Activated CD4-positive, alpha-beta T cell treated with anti-CD3 and anti-CD28 coated beads for 36 hours (primary cell): ENCODE measurements at regions of chr15 and their contacts with region 1.

Region 1: GRCh38 chr15:34514251-34514670 is 69.2 kb downstream of the GOLGA8B start:
- DNase-seq: peak; percentile 39
- ATAC-seq: peak; percentile 52
- H3K4me3 Mint-ChIP-seq: peak overlapping the region; percentile 71
- H3K27ac Mint-ChIP-seq: no peak overlapping the region
- H3K4me1 Mint-ChIP-seq: peaks cover 11% of the 10 kb centered on the region
- H3K27me3 Mint-ChIP-seq: peaks cover 51% of the 10 kb centered on the region

Region 2: GRCh38 chr15:34456658-34457057 is 57.6 kb before region 1 on chr15:
- CTCF ChIA-PET with region 1: no interaction called
- POLR2A ChIA-PET with region 1: no interaction called
- intact Hi-C with region 1: loop called in 1 of 2 experiments (anchors 5 kb)
- DNase-seq: no peak
- ATAC-seq: no peak
- H3K4me3 Mint-ChIP-seq: no peak overlapping the region
- H3K27ac Mint-ChIP-seq: no peak overlapping the region
- H3K4me1 Mint-ChIP-seq: no peaks in the 10 kb centered on the region
- H3K27me3 Mint-ChIP-seq: peaks cover 21% of the 10 kb centered on the region

Region 3: DNA sequence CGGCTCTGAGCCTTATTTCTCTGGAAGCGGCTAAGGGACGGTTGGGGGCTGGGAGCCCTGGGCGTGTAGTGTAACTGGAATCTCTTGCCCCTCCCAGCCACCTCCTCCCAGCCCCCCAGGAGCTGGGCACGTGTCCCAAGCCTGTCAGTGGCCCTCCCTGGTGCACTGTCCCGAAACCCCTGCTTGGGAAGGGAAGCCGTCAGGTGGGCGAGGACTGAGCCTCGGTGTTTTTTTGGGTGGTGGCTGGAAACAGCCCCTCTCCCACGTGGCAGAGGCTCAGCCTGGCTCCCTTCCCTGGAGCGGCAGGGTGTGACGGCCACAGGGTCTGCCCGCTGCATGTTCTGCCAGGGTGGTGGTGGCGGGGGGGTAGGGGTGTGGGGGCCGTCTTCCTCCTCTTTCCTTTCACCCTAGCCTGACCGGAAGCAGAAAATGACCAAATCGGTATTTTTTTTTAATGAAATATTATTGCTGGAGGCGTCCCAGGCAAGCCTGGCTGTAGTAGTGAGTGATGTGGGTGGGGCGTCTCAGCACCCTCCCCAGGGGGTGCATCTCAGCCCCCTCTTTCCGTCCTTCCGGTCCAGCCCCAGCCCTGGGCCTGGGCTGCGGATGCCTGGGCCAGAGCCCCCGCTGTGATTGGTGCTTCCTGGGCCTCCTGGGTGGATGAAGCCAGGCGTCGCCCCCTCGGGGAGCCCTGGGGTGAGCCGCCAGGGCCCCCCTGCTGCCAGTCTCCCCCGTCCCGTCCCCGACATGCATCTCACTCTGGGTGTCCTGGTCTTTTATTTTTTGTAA is 17.9 kb before region 1 on chr15:
- CTCF ChIA-PET with region 1: interaction called, 3 read pairs
- POLR2A ChIA-PET with region 1: no interaction called
- intact Hi-C with region 1: loop called in 1 of 2 experiments (anchors 2 kb)
- DNase-seq: no peak
- ATAC-seq: no peak
- H3K4me3 Mint-ChIP-seq: no peak overlapping the region
- H3K27ac Mint-ChIP-seq: no peak overlapping the region
- H3K4me1 Mint-ChIP-seq: peaks cover 7% of the 10 kb centered on the region
- H3K27me3 Mint-ChIP-seq: peaks cover 61% of the 10 kb centered on the region

Region 4: GRCh38 chr15:34693053-34693744 is 178.9 kb after region 1 on chr15:
- CTCF ChIA-PET with region 1: no interaction called
- POLR2A ChIA-PET with region 1: no interaction called
- intact Hi-C with region 1: no loop called
- DNase-seq: no peak
- ATAC-seq: no peak
- H3K4me3 Mint-ChIP-seq: no peak overlapping the region
- H3K27ac Mint-ChIP-seq: no peak overlapping the region
- H3K4me1 Mint-ChIP-seq: peaks cover 2% of the 10 kb centered on the region
- H3K27me3 Mint-ChIP-seq: peaks cover 9% of the 10 kb centered on the region